ENCODE measurements at regions of chr5 and their contacts with region 1.

Region 1: DNA sequence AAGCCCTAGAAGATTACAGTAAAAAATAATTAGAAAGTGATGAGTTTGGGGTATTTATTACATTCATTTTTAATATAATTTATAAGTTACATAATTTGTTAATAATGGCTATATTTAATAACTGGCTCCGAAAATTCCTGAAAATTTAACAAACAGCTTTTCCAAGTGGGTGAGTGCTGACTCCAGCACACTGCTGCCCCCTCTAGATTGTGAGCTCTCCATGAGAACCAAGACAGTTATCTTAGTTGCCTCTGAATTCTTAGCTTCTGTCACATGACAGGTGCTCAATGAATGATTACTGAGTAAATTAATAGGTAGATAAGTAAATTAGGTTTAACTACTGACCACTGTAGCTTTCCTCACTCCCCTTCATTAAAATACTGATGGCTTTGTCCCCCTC is 7.8 kb downstream of the KLHL3 start:
- DNase-seq: no peak
- ATAC-seq: no peak
- H3K4me3 ChIP-seq: no peak overlapping the region
- H3K27ac ChIP-seq: no peak overlapping the region
- H3K4me1 ChIP-seq: no peaks in the 10 kb centered on the region
- H3K27me3 ChIP-seq: 0 out of 2 replicates have a peak, but pooled peaks cover 5% of the 10 kb centered on the region
- CTCF ChIP-seq: no peak
- POLR2A ChIP-seq: no peak
- RAD21 ChIP-seq: 0 out of 2 replicates have a peak, but pooled peaks have one; percentile 3

Region 2: GRCh38 chr5:137743031-137743640 is 15.1 kb after region 1 on chr5:
- CTCF ChIA-PET with region 1: interaction called, 14 read pairs
- POLR2A ChIA-PET with region 1: no interaction called
- RAD21 ChIA-PET with region 1: no interaction called
- intact Hi-C with region 1: no loop called
- DNase-seq: peak; percentile 59
- ATAC-seq: peak; percentile 88
- H3K4me3 ChIP-seq: no peak overlapping the region
- H3K27ac ChIP-seq: no peak overlapping the region
- H3K4me1 ChIP-seq: no peaks in the 10 kb centered on the region
- H3K27me3 ChIP-seq: no peaks in the 10 kb centered on the region
- CTCF ChIP-seq: peak; percentile 61 to 77 (median 68)
- POLR2A ChIP-seq: no peak
- RAD21 ChIP-seq: peak; percentile 65

Region 3: GRCh38 chr5:137808503-137809205 is 80.6 kb after region 1 on chr5:
- CTCF ChIA-PET with region 1: no interaction called
- POLR2A ChIA-PET with region 1: no interaction called
- RAD21 ChIA-PET with region 1: no interaction called
- intact Hi-C with region 1: no loop called
- DNase-seq: no peak
- ATAC-seq: no peak
- H3K4me3 ChIP-seq: no peak overlapping the region
- H3K27ac ChIP-seq: no peak overlapping the region
- H3K4me1 ChIP-seq: no peaks in the 10 kb centered on the region
- H3K27me3 ChIP-seq: no peaks in the 10 kb centered on the region
- CTCF ChIP-seq: no peak
- POLR2A ChIP-seq: no peak
- RAD21 ChIP-seq: no peak

Region 4: GRCh38 chr5:137975208-137975607 is 247.2 kb after region 1 on chr5:
- CTCF ChIA-PET with region 1: no interaction called
- POLR2A ChIA-PET with region 1: no interaction called
- RAD21 ChIA-PET with region 1: no interaction called
- intact Hi-C with region 1: no loop called
- DNase-seq: no peak
- ATAC-seq: no peak
- H3K4me3 ChIP-seq: no peak overlapping the region
- H3K27ac ChIP-seq: no peak overlapping the region
- H3K4me1 ChIP-seq: no peaks in the 10 kb centered on the region
- H3K27me3 ChIP-seq: no peaks in the 10 kb centered on the region
- CTCF ChIP-seq: no peak
- POLR2A ChIP-seq: no peak
- RAD21 ChIP-seq: no peak

Region 5: GRCh38 chr5:138077065-138077696 is 349.1 kb after region 1 on chr5:
- CTCF ChIA-PET with region 1: no interaction called
- POLR2A ChIA-PET with region 1: no interaction called
- RAD21 ChIA-PET with region 1: no interaction called
- intact Hi-C with region 1: no loop called
- DNase-seq: peak; percentile 62
- ATAC-seq: peak; percentile 90
- H3K4me3 ChIP-seq: no peak overlapping the region
- H3K27ac ChIP-seq: no peak overlapping the region
- H3K4me1 ChIP-seq: no peaks in the 10 kb centered on the region
- H3K27me3 ChIP-seq: no peaks in the 10 kb centered on the region
- CTCF ChIP-seq: peak; percentile 79 to 94 (median 86)
- POLR2A ChIP-seq: no peak
- RAD21 ChIP-seq: peak; percentile 96

Region 6: GRCh38 chr5:138213161-138214029 is 485.3 kb after region 1 on chr5 and contains the start of gene CDC23:
- CTCF ChIA-PET with region 1: no interaction called
- POLR2A ChIA-PET with region 1: no interaction called
- RAD21 ChIA-PET with region 1: no interaction called
- intact Hi-C with region 1: no loop called
- DNase-seq: peak; percentile 97
- ATAC-seq: peak; percentile 93
- H3K4me3 ChIP-seq: peak within 1 kb of the TSS; percentile 91 to 97
- H3K27ac ChIP-seq: peak within 1 kb of the TSS; percentile 58
- H3K4me1 ChIP-seq: peaks cover 0 to 15% of the 10 kb centered on the region in 2 experiments; a peak in 2 of 4 replicates
- H3K27me3 ChIP-seq: no peaks in the 10 kb centered on the region
- CTCF ChIP-seq: no peak
- POLR2A ChIP-seq: peak; percentile 53
- RAD21 ChIP-seq: no peak
- total RNA-seq, gene CDC23: 40.0 TPM

Measured in HCT116 (cell line).